Uterus (tissue), 4 donors: ENCODE measurements at regions of chr12 and their contacts with region 1.

Region 1: GRCh38 chr12:56510786-56511185 is 10.8 kb upstream of the RBMS2 start:
- DNase-seq: no peak
- H3K4me3 ChIP-seq: no peak overlapping the region
- H3K27ac ChIP-seq: no peak overlapping the region
- H3K4me1 ChIP-seq: no peaks in the 10 kb centered on the region
- H3K27me3 ChIP-seq: no peaks in the 10 kb centered on the region
- CTCF ChIP-seq: no peak
- POLR2A ChIP-seq: no peak

Region 2: DNA sequence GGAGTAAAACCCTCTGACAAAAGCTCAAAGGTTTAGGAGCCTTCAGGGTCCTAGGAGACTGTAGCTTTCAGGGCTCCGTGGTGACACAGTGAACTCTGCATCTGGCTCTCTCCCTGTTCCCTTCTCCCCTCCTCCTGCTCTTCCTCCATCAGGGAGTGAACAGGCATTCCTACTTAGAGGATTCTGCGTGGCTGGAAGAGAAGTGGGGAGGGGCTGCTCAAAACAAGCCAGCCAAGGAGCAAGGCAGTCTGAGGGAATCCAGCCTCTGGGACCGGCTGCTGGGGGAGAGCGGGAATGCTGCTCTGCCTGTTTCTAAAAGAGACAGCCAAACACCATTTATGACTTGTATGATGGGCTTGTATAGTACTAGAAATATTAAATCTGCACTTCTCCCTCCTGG is 60.3 kb after region 1 on chr12:
- intact Hi-C with region 1: loop called (anchors 5 kb)
- DNase-seq: no peak
- H3K4me3 ChIP-seq: no peak overlapping the region
- H3K27ac ChIP-seq: peak overlapping the region in 1 of 2 donors; percentile 50
- H3K4me1 ChIP-seq: peaks cover 0 to 3% of the 10 kb centered on the region in 2 donors
- H3K27me3 ChIP-seq: no peaks in the 10 kb centered on the region
- CTCF ChIP-seq: no peak
- POLR2A ChIP-seq: no peak

Region 3: DNA sequence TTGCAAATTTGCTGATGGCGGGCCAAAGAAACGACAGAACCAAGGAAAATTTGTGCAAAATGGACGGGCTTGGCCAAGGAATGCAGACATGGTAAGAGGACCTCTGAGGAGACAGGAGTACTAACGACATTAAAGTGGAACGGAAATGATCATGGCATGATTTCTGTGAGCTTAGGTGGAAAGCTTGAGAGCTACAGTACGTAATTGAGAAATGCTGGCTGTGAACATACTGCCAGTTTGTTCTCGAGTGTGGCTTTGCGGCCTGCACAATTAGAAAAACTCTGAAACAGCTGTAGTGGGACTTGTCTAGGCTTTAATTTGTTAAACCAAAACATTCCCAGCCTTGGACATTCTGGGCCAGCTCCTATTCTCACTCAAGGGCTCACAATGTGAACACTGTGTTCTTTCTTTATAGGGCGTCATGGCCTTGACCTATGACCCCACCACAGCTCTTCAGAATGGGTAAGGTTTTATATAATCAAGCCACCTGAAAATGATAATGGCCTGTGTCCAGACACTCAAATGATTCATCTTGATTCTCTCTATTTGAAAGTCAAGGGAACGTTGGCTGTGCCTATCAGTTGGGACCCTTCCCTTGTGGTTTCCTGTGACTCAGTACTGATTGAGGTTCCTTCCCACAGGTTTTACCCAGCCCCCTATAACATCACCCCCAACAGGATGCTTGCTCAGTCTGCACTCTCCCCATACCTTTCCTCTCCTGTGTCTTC is 70.8 kb after region 1 on chr12:
- intact Hi-C with region 1: no loop called
- DNase-seq: no peak
- H3K4me3 ChIP-seq: no peak overlapping the region
- H3K27ac ChIP-seq: no peak overlapping the region
- H3K4me1 ChIP-seq: no peaks in the 10 kb centered on the region
- H3K27me3 ChIP-seq: no peaks in the 10 kb centered on the region
- CTCF ChIP-seq: no peak
- POLR2A ChIP-seq: no peak